Colonic mucosa (tissue), 4 donors: ENCODE measurements at regions of chr1 and their contacts with region 1.

Region 1: GRCh38 chr1:10209905-10210810 is at the start of gene KIF1B:
- DNase-seq: peak; percentile 99
- H3K4me3 ChIP-seq: peak within 1 kb of the TSS; percentile 91
- H3K27ac ChIP-seq: peak within 1 kb of the TSS; percentile 93
- H3K4me1 ChIP-seq: no peaks in the 10 kb centered on the region
- H3K27me3 ChIP-seq: no peaks in the 10 kb centered on the region
- CTCF ChIP-seq: peak; percentile 95
- total RNA-seq, gene KIF1B: 39.7 to 47.4 TPM

Region 2: DNA sequence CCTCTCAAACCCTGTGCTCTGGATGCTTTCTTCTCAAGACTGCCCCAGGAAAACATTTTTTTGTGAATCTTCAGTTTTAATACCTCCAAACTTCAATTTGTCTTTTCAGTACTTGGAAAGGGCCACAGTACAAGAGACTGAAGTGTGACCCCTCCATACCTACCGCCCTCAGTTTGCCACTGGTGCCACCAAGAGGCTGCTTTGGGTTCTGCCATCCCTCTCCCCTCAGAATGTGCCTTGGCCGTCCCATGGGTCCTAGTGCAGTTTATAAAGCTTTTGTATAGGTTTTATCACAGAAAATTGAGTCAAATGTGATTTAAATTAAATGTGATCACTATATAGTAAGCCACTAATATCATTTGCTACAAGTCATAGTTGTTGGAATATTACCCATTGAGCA is 127.9 kb after region 1 on chr1:
- intact Hi-C with region 1: loop called (anchors 5 kb)
- DNase-seq: peak; percentile 38
- H3K4me3 ChIP-seq: no peak overlapping the region
- H3K27ac ChIP-seq: no peak overlapping the region
- H3K4me1 ChIP-seq: no peaks in the 10 kb centered on the region
- H3K27me3 ChIP-seq: no peaks in the 10 kb centered on the region
- CTCF ChIP-seq: peak; percentile 45